Panc1 (cell line): ENCODE measurements at regions of chr2 and their contacts with region 1.

Region 1: DNA sequence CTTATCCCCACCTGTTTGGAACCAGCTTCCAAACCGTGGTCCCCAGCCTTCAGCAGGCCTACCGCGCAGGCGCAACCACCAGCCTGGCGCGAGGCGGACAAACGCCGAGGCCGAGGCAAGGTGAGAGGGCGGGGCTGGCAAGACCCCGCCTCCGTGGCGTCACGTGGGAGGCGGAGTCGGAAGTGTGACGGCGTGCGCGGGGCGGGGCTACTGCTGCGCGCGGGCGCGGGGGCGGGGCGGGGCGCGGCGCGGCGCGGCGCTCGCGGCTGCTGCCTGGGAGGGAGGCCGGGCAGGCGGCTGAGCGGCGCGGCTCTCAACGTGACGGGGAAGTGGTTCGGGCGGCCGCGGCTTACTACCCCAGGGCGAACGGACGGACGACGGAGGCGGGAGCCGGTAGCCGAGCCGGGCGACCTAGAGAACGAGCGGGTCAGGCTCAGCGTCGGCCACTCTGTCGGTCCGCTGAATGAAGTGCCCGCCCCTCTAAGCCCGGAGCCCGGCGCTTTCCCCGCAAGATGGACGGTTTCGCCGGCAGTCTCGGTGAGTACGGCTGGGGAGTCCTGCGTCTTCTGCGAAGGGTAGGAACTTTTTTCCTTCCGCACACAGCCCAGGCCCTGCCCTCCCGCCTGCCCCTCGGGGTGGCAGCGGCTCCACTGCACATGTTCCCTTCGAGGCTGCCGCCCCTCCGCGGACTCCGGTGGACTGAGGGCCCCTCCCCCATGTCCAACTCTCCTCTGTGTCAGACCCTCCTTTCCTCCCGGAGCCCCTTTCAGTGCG is at the start of gene EML4:
- DNase-seq: peak; percentile 56
- ATAC-seq: peak; percentile 95
- H3K4me3 ChIP-seq: peak within 1 kb of the TSS; percentile 80 to 90
- H3K27ac ChIP-seq: peak within 1 kb of the TSS; percentile 96
- H3K4me1 ChIP-seq: peaks cover 41% of the 10 kb centered on the region
- H3K27me3 ChIP-seq: no peaks in the 10 kb centered on the region
- CTCF ChIP-seq: no peak
- total RNA-seq, gene EML4: 107 TPM

Region 2: GRCh38 chr2:42267530-42267929 is 98.2 kb after region 1 on chr2:
- CTCF ChIA-PET with region 1: no interaction called
- POLR2A ChIA-PET with region 1: interaction called, 14 read pairs
- in situ Hi-C with region 1: no loop called
- intact Hi-C with region 1: no loop called
- DNase-seq: no peak
- ATAC-seq: no peak; the same call in 1 of the 2 replicates
- H3K4me3 ChIP-seq: no peak overlapping the region
- H3K27ac ChIP-seq: no peak overlapping the region
- H3K4me1 ChIP-seq: no peaks in the 10 kb centered on the region
- H3K27me3 ChIP-seq: no peaks in the 10 kb centered on the region
- CTCF ChIP-seq: no peak